ENCODE measurements at regions of chr10 and their contacts with region 1.

Region 1: GRCh38 chr10:51063659-51064535 is 10.4 kb upstream of the PRKG1 start:
- DNase-seq: peak; percentile 44
- H3K4me3 ChIP-seq: no peak overlapping the region
- H3K27ac ChIP-seq: no peak overlapping the region
- H3K4me1 ChIP-seq: no peaks in the 10 kb centered on the region
- H3K27me3 ChIP-seq: peaks cover 13% of the 10 kb centered on the region
- CTCF ChIP-seq: peak; percentile 59

Region 2: DNA sequence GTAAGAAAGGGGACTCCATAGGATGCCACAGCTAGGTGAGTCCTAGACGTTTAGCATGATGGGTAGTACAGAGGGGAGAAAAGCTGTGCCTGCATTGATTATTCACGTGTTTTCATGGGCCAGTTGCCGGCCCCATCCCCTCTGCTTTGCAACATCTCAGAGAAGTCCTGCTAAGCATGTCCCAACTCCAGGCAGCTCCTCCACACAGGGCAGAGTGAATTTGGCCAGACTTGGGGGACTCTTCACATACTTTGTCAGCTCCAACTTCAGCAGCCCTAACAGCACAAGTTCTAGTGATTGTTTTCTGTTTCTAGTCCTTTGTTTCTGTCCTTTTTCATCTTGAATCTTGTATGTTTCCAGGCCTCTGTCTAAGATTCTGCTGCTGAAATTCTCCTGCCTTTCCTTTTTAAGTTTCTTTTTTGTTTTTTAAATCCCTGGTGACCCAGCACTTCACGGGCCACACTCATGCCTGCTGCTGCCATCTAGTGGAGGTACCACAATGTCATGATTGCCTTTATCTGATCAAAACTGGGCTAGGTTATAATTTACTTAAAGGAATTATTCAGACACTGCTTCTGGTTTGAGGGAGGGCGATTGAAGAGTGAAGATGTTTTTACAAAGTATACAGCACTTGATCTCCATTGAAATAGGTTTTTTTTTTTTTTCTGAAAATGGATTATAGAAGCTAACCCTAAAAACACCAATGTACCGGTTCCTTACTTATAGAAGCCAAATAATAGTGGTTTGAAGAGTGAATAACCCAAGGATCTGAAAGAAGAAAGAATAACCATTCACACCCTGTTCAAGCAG is 358.6 kb after region 1 on chr10:
- CTCF ChIA-PET with region 1: no interaction called
- POLR2A ChIA-PET with region 1: no interaction called
- intact Hi-C with region 1: loop called (anchors 1 kb)
- DNase-seq: peak; percentile 61
- H3K4me3 ChIP-seq: no peak overlapping the region
- H3K27ac ChIP-seq: no peak overlapping the region
- H3K4me1 ChIP-seq: no peaks in the 10 kb centered on the region
- H3K27me3 ChIP-seq: no peaks in the 10 kb centered on the region
- CTCF ChIP-seq: peak; percentile 84

Region 3: DNA sequence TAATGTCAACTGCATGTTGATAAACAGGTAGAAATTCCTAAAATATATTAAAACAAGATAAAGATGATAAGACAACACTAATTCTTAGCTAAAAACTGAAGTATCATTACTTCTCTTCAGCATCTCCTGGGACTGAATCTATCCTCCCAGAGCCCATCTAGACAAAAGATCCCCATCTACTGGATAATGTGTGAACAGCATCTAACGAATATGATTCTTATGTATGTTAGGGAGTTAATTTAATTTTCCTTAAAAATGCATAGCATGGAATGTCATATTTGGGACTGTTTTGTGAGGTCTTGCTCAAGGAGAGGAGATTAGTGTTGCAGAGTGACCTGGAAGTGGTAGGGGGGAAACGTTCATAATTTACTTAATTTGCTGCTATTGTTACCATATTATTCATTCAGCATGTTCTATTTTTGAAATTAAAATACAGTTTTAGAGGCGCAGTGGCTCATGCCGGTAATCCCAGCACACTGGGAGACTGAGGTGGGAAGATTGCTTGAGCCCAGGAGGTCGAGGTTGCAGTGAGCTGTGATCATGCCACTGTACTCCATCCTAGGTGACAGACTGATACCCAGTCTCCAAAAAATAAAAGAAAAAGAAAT is 940.5 kb after region 1 on chr10:
- CTCF ChIA-PET with region 1: no interaction called
- POLR2A ChIA-PET with region 1: no interaction called
- intact Hi-C with region 1: loop called (anchors 10 kb)
- DNase-seq: peak; percentile 60
- H3K4me3 ChIP-seq: no peak overlapping the region
- H3K27ac ChIP-seq: no peak overlapping the region
- H3K4me1 ChIP-seq: no peaks in the 10 kb centered on the region
- H3K27me3 ChIP-seq: no peaks in the 10 kb centered on the region
- CTCF ChIP-seq: peak; percentile 66

Region 4: DNA sequence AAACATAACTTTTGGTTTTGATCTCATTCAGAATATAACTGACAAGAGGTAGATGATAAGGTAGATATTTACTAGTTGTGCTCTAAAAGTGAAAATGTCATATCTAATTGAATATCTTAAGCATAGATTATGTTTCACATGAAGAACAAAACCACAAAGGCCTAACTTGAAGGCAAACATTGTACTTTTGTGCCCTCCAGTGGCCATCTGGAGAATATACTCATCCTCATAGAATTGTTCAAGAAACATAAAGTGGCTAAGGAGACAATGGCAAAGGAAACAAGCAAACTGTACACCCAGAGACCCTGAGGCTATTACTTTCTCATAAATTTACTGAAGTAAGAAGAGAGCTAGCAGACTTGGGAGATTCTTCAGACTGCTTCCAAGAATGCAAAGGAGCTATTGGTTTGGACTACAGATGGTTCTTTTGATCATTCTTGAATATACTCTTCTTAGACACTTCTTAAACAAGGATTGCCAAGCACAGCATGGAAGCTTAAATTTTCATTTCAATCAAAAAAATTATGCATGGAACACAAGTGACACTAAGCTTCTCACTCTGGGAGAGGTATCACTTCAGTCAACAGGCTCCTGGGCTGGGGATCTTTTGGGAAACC is 1152.0 kb after region 1 on chr10:
- CTCF ChIA-PET with region 1: no interaction called
- POLR2A ChIA-PET with region 1: no interaction called
- intact Hi-C with region 1: loop called (anchors 5 kb)
- DNase-seq: peak; percentile 77
- H3K4me3 ChIP-seq: no peak overlapping the region
- H3K27ac ChIP-seq: no peak overlapping the region
- H3K4me1 ChIP-seq: peaks cover 18% of the 10 kb centered on the region
- H3K27me3 ChIP-seq: no peaks in the 10 kb centered on the region
- CTCF ChIP-seq: peak; percentile 81